Naive thymus-derived CD4-positive, alpha-beta T cell (primary cell): ENCODE measurements at regions of chr1 and their contacts with region 1.

Region 1: DNA sequence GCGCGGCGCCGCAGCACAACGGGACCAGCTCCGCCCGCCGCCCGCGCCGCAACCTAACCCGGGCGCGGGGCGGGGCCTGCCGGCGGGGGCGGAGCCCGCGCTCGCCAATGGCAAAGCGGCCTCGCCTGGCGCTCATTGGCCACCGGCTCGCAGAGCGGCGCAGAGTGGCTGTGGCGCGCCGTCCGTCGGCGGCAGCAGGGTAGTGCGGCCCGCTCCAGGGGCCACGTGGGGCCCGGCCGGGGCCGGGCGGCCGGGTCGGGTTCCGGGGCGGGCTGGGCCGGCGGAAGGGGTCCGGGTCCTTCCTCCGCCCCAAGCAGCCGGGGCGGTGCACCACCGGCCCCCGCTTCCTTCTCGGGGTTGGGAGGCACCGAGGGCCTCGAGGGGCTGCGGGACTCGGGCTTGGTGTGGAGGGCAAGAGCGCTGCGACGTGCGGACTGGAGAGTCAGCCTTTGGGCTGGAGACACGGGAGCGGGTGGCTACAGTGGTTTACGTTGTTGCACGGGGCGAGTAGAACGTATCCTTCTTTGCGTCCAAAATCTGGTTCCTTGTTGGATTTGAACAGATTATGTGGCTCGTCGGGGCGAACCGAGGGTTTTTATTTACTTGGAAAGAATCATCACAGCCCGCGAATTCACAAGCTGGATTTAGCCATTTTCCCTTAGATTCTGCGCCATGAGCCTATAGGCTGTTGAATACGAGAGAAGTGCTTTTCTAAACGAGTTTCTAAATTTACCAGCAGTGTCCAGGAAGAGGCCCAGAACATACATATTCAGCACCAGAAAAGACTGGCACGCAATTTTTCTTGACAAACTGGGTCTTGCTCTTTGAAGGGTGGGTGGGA is at the start of gene SRM:
- DNase-seq: peak; percentile 84 to 95 (median 91)
- ATAC-seq: peak; percentile 97
- H3K4me3 ChIP-seq: peak within 1 kb of the TSS; percentile 92
- H3K4me3 Mint-ChIP-seq: peak within 1 kb of the TSS; percentile 91 to 98 (median 93)
- H3K27ac ChIP-seq: peak within 1 kb of the TSS; percentile 85
- H3K27ac Mint-ChIP-seq: peak within 1 kb of the TSS; percentile 81 to 95 (median 91)
- H3K4me1 ChIP-seq: peaks cover 5 to 19% of the 10 kb centered on the region in 2 donors
- H3K4me1 Mint-ChIP-seq: peaks cover 6 to 37% (median 24%) of the 10 kb centered on the region in 7 donors
- H3K27me3 ChIP-seq: no peaks in the 10 kb centered on the region
- H3K27me3 Mint-ChIP-seq: no peaks in the 10 kb centered on the region
- total RNA-seq, gene SRM: 30.9 to 116 (median 44.1) TPM

Region 2: GRCh38 chr1:11012250-11013171 is 47.7 kb before region 1 on chr1 and contains the start of gene TARDBP:
- CTCF ChIA-PET with region 1: interaction called, 5 read pairs
- POLR2A ChIA-PET with region 1: interaction called, 12 read pairs
- intact Hi-C with region 1: loop called (anchors 1 kb)
- DNase-seq: peak; percentile 88 to 95 (median 93)
- ATAC-seq: peak; percentile 95
- H3K4me3 ChIP-seq: peak within 1 kb of the TSS; percentile 74
- H3K4me3 Mint-ChIP-seq: peak within 1 kb of the TSS; percentile 86 to 96 (median 93)
- H3K27ac ChIP-seq: peak within 1 kb of the TSS; percentile 94
- H3K27ac Mint-ChIP-seq: peak within 1 kb of the TSS; percentile 95 to 98 (median 98)
- H3K4me1 ChIP-seq: peaks cover 19 to 24% of the 10 kb centered on the region in 2 donors
- H3K4me1 Mint-ChIP-seq: peaks cover 15 to 36% (median 26%) of the 10 kb centered on the region in 7 donors
- H3K27me3 ChIP-seq: no peaks in the 10 kb centered on the region
- H3K27me3 Mint-ChIP-seq: no peaks in the 10 kb centered on the region
- total RNA-seq, gene TARDBP: 114 to 196 (median 174) TPM

Region 3: GRCh38 chr1:11099310-11100149 is 39.3 kb after region 1 on chr1 and contains the start of gene EXOSC10:
- CTCF ChIA-PET with region 1: no interaction called
- POLR2A ChIA-PET with region 1: interaction called, 9 read pairs
- intact Hi-C with region 1: loop called (anchors 1 kb)
- DNase-seq: peak; percentile 90 to 97 (median 95)
- ATAC-seq: peak; percentile 99
- H3K4me3 ChIP-seq: peak within 1 kb of the TSS; percentile 74
- H3K4me3 Mint-ChIP-seq: peak within 1 kb of the TSS; percentile 87 to 99 (median 96)
- H3K27ac ChIP-seq: peak within 1 kb of the TSS; percentile 88
- H3K27ac Mint-ChIP-seq: peak within 1 kb of the TSS; percentile 91 to 97 (median 95)
- H3K4me1 ChIP-seq: peaks cover 3 to 4% of the 10 kb centered on the region in 2 donors
- H3K4me1 Mint-ChIP-seq: peaks cover 6 to 27% (median 20%) of the 10 kb centered on the region in 7 donors
- H3K27me3 ChIP-seq: no peaks in the 10 kb centered on the region
- H3K27me3 Mint-ChIP-seq: no peaks in the 10 kb centered on the region
- total RNA-seq, gene EXOSC10: 72.0 to 83.4 (median 80.9) TPM